K562 (cell line): ENCODE measurements at regions of chr16 and their contacts with region 1.

Region 1: GRCh38 chr16:25111403-25112166 is at the start of gene LCMT1:
- DNase-seq: peak; percentile 94 to 97 (median 96)
- ATAC-seq: peak; percentile 88
- H3K4me3 ChIP-seq: peak within 1 kb of the TSS; percentile 76
- H3K27ac ChIP-seq: peak within 1 kb of the TSS; percentile 91
- H3K4me1 ChIP-seq: peaks cover 15 to 20% of the 10 kb centered on the region in 2 experiments
- H3K27me3 ChIP-seq: no peaks in the 10 kb centered on the region
- CTCF ChIP-seq: no peak; a peak in 1 of 6 replicates
- EP300 ChIP-seq: no peak
- POLR2A ChIP-seq: peak; percentile 69
- RAD21 ChIP-seq: no peak
- polyA plus RNA-seq, gene LCMT1: 34.2 to 42.8 TPM

Region 2: GRCh38 chr16:24834459-24835335 is 276.9 kb before region 1 on chr16:
- CTCF ChIA-PET with region 1: no interaction called
- POLR2A ChIA-PET with region 1: interaction called, 4 read pairs
- in situ Hi-C with region 1: no loop called
- intact Hi-C with region 1: loop called (anchors 2 kb)
- DNase-seq: peak; percentile 50 to 80 (median 62)
- ATAC-seq: peak; percentile 89
- H3K4me3 ChIP-seq: no peak overlapping the region
- H3K27ac ChIP-seq: no peak overlapping the region
- H3K4me1 ChIP-seq: peaks cover 15 to 19% of the 10 kb centered on the region in 2 experiments
- H3K27me3 ChIP-seq: no peaks in the 10 kb centered on the region
- CTCF ChIP-seq: peak; percentile 76 to 92 (median 83)
- EP300 ChIP-seq: no peak; the same call in 1 of the 2 replicates
- POLR2A ChIP-seq: no peak
- RAD21 ChIP-seq: peak; percentile 69 to 90

Region 3: DNA sequence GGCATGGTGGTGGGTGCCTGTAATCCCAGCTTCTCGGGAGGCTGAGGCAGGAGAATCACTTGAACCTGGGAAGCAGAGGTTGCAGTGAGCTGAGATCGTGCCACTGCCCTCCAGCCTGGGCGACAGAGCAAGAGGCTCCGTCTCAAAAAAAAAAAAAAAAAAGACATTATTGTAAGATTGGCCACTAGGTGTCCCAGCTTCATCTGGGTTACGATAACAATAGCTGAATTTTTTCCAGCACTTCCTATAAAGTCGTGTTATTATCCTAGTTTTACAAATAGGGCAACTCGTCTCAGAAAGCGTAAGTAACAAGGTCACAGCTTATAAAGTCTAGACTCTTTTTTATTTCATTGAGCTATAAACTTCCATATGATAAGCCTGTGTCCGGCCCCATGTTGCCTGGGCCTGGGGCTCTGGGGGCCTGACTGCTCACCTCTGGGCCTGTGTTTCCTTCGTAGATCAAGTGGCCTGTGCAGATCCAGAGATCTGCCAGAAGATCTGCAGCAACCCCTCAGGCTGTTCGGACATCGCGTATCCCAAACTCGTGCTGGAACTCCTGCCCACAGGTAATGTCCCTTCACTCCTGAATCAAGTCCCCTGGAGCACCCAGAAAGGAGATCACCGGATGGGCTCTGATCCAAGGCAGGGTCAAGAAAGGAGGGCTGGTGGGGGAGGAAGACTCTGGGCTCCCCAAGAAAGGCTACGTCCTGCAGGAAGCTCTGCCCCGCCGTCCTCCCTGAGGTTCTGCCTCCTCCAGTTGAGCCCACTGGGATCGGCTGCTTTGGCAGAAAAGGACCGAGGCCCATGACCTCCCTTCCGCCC is 205.2 kb before region 1 on chr16:
- CTCF ChIA-PET with region 1: no interaction called
- POLR2A ChIA-PET with region 1: no interaction called
- in situ Hi-C with region 1: loop called (anchors 10 kb)
- intact Hi-C with region 1: loop called (anchors 5 kb)
- DNase-seq: peak in 1 of 4 experiments; percentile 30
- ATAC-seq: peak; percentile 65
- H3K4me3 ChIP-seq: no peak overlapping the region
- H3K27ac ChIP-seq: no peak overlapping the region
- H3K4me1 ChIP-seq: 0 out of 5 replicates have a peak, but pooled peaks cover 0 to 6% of the 10 kb centered on the region in 2 experiments
- H3K27me3 ChIP-seq: peaks cover 9 to 23% of the 10 kb centered on the region in 2 experiments
- CTCF ChIP-seq: peak; percentile 37 to 60 (median 52); a peak in 4 of 6 replicates
- EP300 ChIP-seq: no peak
- POLR2A ChIP-seq: no peak
- RAD21 ChIP-seq: peak; percentile 15 to 51; a peak in 3 of 4 replicates

Region 4: DNA sequence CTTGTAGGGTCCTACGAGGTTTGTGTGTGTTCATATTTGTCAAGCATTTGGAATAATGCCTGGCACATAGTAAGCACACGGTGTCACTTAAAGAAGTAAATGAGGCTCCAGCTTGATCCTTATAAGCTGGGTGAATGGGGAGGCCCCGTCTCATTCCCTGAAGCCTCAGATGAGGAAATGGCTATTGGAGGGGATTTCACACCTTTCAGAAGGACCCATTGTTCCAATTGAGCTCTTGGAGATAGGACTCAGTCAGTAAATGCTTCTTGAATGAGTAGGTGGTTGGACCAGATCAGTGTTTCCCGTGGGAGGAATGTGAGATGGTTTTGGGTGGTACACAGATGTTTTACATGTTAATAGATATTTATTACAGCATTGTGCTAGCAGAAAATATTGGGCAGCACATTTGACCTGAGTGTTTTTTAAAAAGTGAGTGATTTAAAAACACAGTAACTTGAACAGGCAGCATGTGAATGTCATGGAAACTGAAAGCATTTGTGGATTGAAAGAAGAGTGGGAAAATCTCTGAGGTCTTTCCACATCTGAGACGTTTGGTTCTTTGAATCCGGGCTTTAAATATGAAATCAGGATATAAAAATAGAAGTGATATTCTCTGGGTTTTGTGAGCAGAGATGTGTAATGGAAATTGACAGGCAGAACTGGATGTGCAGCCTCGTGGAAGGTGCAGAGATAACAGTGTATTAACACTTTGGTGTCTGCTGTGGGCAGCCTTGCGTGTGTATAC is 60.0 kb before region 1 on chr16:
- CTCF ChIA-PET with region 1: interaction called, 12 read pairs
- POLR2A ChIA-PET with region 1: no interaction called
- in situ Hi-C with region 1: no loop called
- intact Hi-C with region 1: loop called (anchors 1 kb)
- DNase-seq: no peak
- ATAC-seq: no peak
- H3K4me3 ChIP-seq: no peak overlapping the region
- H3K27ac ChIP-seq: no peak overlapping the region
- H3K4me1 ChIP-seq: peaks cover 10 to 32% of the 10 kb centered on the region in 2 experiments
- H3K27me3 ChIP-seq: no peaks in the 10 kb centered on the region
- CTCF ChIP-seq: no peak
- EP300 ChIP-seq: no peak
- POLR2A ChIP-seq: no peak
- RAD21 ChIP-seq: no peak

Region 5: DNA sequence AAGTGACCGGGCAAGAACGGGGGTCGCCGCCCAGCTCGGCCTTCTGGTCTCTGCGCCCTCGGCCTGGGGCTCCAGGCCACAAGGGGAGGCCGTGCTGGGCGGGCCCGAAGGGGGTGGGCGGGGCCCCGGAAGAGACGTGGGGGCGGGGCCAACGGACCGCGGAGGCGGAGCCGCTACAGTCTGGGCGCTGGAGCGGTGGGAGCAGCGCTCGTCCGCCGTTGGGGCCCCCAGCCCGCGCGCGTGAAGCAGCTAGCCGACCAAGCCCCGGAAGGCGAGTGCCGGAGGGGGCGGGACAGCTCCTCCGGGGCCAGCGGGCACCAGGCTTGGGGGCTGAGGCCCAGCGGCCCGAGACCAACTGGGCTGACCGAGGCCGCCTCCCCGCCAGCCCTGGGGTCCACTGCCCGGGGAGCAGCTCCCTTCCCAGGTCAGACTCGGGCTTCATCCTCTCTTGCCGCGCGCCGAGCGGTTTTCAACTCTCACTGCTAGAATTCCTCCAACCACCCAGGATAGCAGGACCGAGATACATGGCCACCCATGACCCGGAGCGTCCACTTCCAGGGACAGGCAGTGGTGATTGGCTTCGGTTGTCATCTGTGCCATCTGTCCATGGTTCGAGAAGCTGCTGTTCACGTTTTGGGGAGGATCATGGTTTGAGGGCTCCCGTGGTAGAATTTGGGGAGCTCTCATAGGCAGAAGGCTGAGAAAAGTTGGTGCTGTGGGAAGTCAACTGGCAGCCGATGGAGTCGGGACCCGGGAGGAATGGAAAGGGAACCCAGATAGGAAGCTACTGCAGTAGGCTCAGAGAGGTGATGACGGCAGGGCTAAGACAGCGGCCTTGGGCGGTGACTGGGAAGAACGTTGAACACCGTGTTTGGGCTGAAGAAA is 44.6 kb before region 1 on chr16:
- CTCF ChIA-PET with region 1: interaction called, 6 read pairs
- POLR2A ChIA-PET with region 1: interaction called, 4 read pairs
- in situ Hi-C with region 1: no loop called
- intact Hi-C with region 1: loop called (anchors 1 kb)
- DNase-seq: peak; percentile 90 to 98 (median 96)
- ATAC-seq: peak; percentile 98
- H3K4me3 ChIP-seq: peak overlapping the region; percentile 73
- H3K27ac ChIP-seq: peak overlapping the region; percentile 86
- H3K4me1 ChIP-seq: peaks cover 14 to 18% of the 10 kb centered on the region in 2 experiments
- H3K27me3 ChIP-seq: no peaks in the 10 kb centered on the region
- CTCF ChIP-seq: no peak
- EP300 ChIP-seq: no peak
- POLR2A ChIP-seq: peak; percentile 92
- RAD21 ChIP-seq: no peak

Region 6: GRCh38 chr16:25224731-25225319 is 113.2 kb after region 1 on chr16:
- CTCF ChIA-PET with region 1: no interaction called
- POLR2A ChIA-PET with region 1: interaction called, 3 read pairs
- in situ Hi-C with region 1: no loop called
- intact Hi-C with region 1: loop called (anchors 1 kb)
- DNase-seq: no peak
- ATAC-seq: no peak
- H3K4me3 ChIP-seq: no peak overlapping the region
- H3K27ac ChIP-seq: no peak overlapping the region
- H3K4me1 ChIP-seq: peaks cover 3 to 4% of the 10 kb centered on the region in 2 experiments; a peak in 4 of 5 replicates
- H3K27me3 ChIP-seq: no peaks in the 10 kb centered on the region; a peak in 1 of 5 replicates
- CTCF ChIP-seq: no peak
- EP300 ChIP-seq: no peak
- POLR2A ChIP-seq: no peak
- RAD21 ChIP-seq: no peak